MCF 10A (cell line): ENCODE measurements at regions of chr6 and their contacts with region 1.

Region 1: DNA sequence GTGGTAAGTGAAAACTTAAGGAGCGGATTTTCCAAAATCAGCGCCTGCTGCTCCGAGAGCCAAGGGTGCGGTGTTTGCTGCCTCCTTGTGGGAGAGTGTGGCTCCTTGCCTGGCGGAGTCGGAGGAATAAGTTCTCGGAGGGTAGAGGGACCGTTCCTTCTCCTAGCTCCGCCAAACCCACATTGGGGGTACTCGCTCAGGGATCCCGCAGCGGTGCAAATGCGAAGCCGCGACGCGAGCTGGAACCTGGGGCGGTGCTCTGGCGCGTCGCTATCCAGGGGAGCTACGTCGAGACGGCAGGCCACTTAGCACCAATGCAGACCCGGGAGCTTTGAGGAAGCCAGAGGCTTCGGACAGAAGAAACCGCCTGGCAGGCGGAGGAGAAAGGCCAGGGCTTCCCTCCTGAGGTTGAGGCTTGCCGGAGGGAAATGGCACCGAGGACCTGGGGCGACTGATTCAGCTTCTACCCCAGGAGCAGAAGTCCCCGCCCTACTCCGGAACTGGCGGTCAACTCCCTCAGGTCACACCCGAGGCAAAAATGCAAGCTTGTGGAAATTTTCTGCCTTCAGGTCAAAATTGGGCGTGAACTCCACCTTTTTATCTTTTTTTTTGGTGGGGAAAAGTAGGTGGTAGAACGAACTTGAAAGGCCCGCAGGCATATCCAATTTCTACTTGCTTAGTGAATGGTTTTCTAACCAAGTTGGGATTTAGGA is 5.7 kb upstream of the DDX43 start:
- DNase-seq: peak; percentile 74
- H3K4me3 Mint-ChIP-seq: peak overlapping the region; percentile 83
- H3K27ac Mint-ChIP-seq: peak overlapping the region; percentile 51
- H3K4me1 Mint-ChIP-seq: no peaks in the 10 kb centered on the region
- H3K27me3 Mint-ChIP-seq: no peaks in the 10 kb centered on the region
- CTCF ChIP-seq: peak; percentile 77

Region 2: DNA sequence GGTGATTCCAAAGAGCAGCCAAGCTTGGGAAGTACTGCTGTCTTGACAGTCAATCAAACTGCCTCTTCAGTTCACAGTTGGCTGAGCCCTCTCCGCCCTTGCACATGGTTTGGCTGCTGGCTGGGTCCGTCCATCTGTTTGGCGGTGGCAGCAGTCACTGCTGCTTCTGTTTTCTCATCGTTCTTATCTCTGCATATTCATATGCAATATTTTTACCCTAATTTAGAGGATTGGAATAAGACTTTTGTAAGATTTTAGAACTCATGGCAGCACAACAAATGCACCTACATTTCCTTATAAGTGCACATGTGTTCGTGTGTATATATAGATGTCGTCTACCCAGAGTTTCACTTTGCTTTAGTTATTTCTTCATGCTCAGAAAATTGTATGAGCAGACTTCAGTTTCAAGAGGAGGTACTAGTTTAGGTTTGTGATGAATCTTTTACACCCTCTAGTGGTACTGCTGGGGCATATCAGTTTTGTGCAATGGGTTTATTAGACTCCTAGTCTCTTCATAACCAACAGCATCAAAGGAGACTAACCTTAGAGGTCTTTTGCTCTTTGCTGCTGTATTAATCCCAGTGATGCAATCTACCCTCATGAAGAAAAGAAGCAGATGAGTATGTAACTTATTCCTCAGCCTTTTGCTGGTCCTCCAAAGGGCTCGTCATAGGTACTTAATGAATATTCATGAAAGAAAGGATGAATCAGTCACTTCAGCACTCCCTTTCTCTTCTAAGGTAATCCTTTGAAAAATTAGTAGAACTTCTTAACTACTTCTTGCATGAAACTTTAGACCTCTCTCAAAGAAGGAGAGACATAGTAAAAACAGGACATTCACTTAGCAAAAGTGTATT is 208.0 kb before region 1 on chr6:
- CTCF ChIA-PET with region 1: interaction called, 3 read pairs
- POLR2A ChIA-PET with region 1: no interaction called
- intact Hi-C with region 1: loop called (anchors 2 kb)
- DNase-seq: peak; percentile 70
- H3K4me3 Mint-ChIP-seq: peak overlapping the region; percentile 51
- H3K27ac Mint-ChIP-seq: no peak overlapping the region
- H3K4me1 Mint-ChIP-seq: no peaks in the 10 kb centered on the region
- H3K27me3 Mint-ChIP-seq: no peaks in the 10 kb centered on the region
- CTCF ChIP-seq: peak; percentile 81

Region 3: DNA sequence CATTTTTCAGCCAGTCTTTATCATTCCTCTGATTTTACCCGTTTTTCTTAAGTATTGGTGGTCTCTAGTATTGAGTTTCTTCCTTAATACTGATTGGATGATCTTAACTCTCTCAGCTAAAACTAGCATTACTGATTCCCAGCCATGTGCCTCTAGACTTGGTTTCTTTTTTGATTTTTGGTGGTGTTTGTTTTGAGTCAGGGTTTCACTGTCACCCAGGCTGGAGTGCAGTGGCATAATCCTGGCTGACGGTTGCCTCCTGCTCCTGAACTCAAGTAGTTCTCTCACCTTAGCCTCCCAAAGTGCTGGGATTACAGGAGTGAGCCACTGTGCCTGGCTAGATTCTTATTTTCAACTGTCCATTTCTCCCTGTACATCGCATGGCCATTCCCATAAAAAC is 59.8 kb before region 1 on chr6:
- CTCF ChIA-PET with region 1: interaction called, 18 read pairs
- POLR2A ChIA-PET with region 1: no interaction called
- intact Hi-C with region 1: no loop called
- DNase-seq: no peak
- H3K4me3 Mint-ChIP-seq: no peak overlapping the region
- H3K27ac Mint-ChIP-seq: no peak overlapping the region
- H3K4me1 Mint-ChIP-seq: peaks cover 5% of the 10 kb centered on the region
- H3K27me3 Mint-ChIP-seq: peaks cover 13% of the 10 kb centered on the region
- CTCF ChIP-seq: no peak

Region 4: GRCh38 chr6:73375216-73375615 is 13.7 kb before region 1 on chr6:
- CTCF ChIA-PET with region 1: interaction called, 26 read pairs
- POLR2A ChIA-PET with region 1: no interaction called
- intact Hi-C with region 1: no loop called
- DNase-seq: no peak
- H3K4me3 Mint-ChIP-seq: no peak overlapping the region
- H3K27ac Mint-ChIP-seq: no peak overlapping the region
- H3K4me1 Mint-ChIP-seq: no peaks in the 10 kb centered on the region
- H3K27me3 Mint-ChIP-seq: no peaks in the 10 kb centered on the region
- CTCF ChIP-seq: no peak

Region 5: GRCh38 chr6:73610444-73611275 is 221.7 kb after region 1 on chr6:
- CTCF ChIA-PET with region 1: interaction called, 4 read pairs
- POLR2A ChIA-PET with region 1: no interaction called
- intact Hi-C with region 1: loop called (anchors 2 kb)
- DNase-seq: peak; percentile 64
- H3K4me3 Mint-ChIP-seq: no peak overlapping the region
- H3K27ac Mint-ChIP-seq: peak overlapping the region; percentile 19
- H3K4me1 Mint-ChIP-seq: no peaks in the 10 kb centered on the region
- H3K27me3 Mint-ChIP-seq: no peaks in the 10 kb centered on the region
- CTCF ChIP-seq: peak; percentile 42